ENCODE measurements at regions of chr15 and their contacts with region 1.

Region 1: GRCh38 chr15:80275934-80276333 is 23.9 kb upstream of the CTXND1 start:
- DNase-seq: peak; percentile 46
- ATAC-seq: peak; percentile 55; the same call in 1 of the 2 replicates
- H3K4me3 ChIP-seq: no peak overlapping the region
- H3K27ac ChIP-seq: no peak overlapping the region
- H3K4me1 ChIP-seq: no peaks in the 10 kb centered on the region
- H3K27me3 ChIP-seq: peaks cover 45% of the 10 kb centered on the region
- CTCF ChIP-seq: no peak

Region 2: DNA sequence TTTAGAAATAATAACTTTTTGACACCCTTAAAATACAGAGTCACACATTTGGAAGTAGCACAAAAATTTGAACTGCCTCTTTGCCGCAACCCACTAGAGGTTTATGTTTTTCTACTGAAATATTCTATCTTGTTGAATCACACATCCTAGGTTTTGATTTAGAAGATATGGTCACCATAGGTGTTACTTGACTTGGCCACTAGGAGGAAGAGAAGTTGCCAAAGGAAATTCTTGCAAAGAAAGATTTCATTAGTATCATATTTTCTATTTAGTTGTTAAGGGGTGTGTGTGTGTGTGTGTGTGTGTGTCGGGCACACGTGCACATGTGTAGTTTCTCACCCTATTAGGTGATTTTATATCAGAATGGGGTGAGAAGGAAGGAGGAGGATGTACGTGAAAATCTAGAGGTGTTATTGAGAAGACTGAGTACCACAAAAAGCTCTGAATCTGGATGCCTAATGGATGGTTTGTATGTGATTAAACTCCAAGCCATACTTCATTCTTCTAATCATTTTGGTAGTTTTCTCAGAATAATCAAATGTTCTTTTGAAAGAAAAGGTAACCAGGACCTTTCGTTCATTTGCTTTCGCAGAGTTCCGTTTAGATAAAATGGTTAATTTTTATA is 184.9 kb before region 1 on chr15:
- CTCF ChIA-PET with region 1: no interaction called
- POLR2A ChIA-PET with region 1: interaction called, 22 read pairs
- intact Hi-C with region 1: no loop called
- DNase-seq: peak; percentile 25
- ATAC-seq: no peak
- H3K4me3 ChIP-seq: no peak overlapping the region
- H3K27ac ChIP-seq: no peak overlapping the region
- H3K4me1 ChIP-seq: peaks cover 9% of the 10 kb centered on the region
- H3K27me3 ChIP-seq: no peaks in the 10 kb centered on the region
- CTCF ChIP-seq: peak; percentile 56

Measured in PC-3 (cell line).